ENCODE measurements at regions of chr10 and their contacts with region 1.

Region 1: DNA sequence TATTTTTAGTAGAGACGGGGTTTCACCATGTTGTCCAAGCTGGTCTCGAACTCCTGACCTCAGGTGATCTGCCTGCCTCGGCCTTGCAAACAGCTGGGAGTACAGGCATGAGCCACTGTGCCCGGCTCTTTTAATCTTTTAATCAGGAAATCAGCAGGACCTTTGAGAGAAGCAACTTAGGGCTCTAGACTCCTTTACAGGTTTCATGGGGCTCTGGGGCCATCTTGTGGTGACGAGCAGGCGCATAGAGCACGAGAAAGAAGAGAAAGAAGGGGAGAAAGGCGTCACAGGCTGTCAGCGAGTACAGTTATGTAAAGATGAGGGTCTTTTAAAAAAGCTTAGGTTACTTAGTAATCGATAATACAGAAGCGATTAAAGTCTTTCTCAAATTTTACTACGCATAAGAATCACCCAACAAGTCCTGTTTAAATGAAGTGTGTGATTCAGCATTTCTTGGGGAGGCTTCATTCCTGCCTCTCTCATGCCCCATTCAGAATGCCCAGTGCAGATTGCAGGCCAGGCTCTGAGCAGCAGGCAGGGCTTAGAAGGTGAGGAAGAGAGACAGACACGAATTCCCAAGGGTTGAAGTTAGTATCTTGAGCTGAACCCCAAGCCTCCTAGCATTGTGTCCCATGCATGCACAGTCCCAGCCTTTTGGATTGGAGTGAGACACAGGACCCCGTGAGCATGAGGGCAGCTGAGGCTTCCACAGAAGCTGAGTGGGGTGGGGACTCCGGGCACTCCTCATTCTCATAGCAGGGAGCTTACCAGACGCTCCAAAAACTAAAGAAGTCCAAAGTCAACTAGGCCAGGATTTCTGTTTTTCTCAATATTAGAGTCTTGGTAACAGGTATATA is 23.6 kb upstream of the PFKP start:
- DNase-seq: peak in 4 of 6 donors; percentile 25 to 58 (median 41)
- ATAC-seq: peak; percentile 69 to 93 (median 87)
- H3K4me3 ChIP-seq: no peak overlapping the region
- H3K27ac ChIP-seq: no peak overlapping the region
- H3K4me1 ChIP-seq: no peaks in the 10 kb centered on the region
- H3K27me3 ChIP-seq: no peaks in the 10 kb centered on the region
- CTCF ChIP-seq: peak in 3 of 4 donors; percentile 30 to 38 (median 37)

Region 2: GRCh38 chr10:2927958-2928840 is 115.5 kb before region 1 on chr10:
- intact Hi-C with region 1: loop called in 2 of 3 experiments (anchors 5 to 10 kb)
- DNase-seq: peak; percentile 45 to 84 (median 68)
- ATAC-seq: peak; percentile 60 to 95 (median 88)
- H3K4me3 ChIP-seq: no peak overlapping the region
- H3K27ac ChIP-seq: no peak overlapping the region
- H3K4me1 ChIP-seq: no peaks in the 10 kb centered on the region
- H3K27me3 ChIP-seq: peaks cover 0 to 6% (median 0%) of the 10 kb centered on the region in 4 donors
- CTCF ChIP-seq: peak; percentile 35 to 69 (median 48)

Region 3: GRCh38 chr10:2949948-2950354 is 93.8 kb before region 1 on chr10:
- intact Hi-C with region 1: no loop called
- DNase-seq: no peak
- ATAC-seq: no peak
- H3K4me3 ChIP-seq: no peak overlapping the region
- H3K27ac ChIP-seq: no peak overlapping the region
- H3K4me1 ChIP-seq: peaks cover 0 to 5% (median 3%) of the 10 kb centered on the region in 3 donors
- H3K27me3 ChIP-seq: no peaks in the 10 kb centered on the region
- CTCF ChIP-seq: no peak

Measured in pancreas (tissue), 10 donors.